ENCODE measurements at regions of chrX and their contacts with region 1.

Region 1: GRCh38 chrX:55057675-55058249 is 17.1 kb upstream of the PAGE2B start:
- DNase-seq: peak in 1 of 5 donors; percentile 18
- ATAC-seq: peak in 3 of 4 donors; percentile 53 to 77 (median 66)
- H3K4me3 ChIP-seq: peak overlapping the region in 4 of 12 donors; percentile 18 to 42 (median 41)
- H3K27ac ChIP-seq: no peak overlapping the region
- H3K4me1 ChIP-seq: peaks cover 0 to 8% (median 0%) of the 10 kb centered on the region in 12 donors
- H3K27me3 ChIP-seq: peaks cover 0 to 10% (median 0%) of the 10 kb centered on the region in 9 donors
- CTCF ChIP-seq: peak; percentile 59 to 83 (median 72)
- POLR2A ChIP-seq: no peak

Region 2: DNA sequence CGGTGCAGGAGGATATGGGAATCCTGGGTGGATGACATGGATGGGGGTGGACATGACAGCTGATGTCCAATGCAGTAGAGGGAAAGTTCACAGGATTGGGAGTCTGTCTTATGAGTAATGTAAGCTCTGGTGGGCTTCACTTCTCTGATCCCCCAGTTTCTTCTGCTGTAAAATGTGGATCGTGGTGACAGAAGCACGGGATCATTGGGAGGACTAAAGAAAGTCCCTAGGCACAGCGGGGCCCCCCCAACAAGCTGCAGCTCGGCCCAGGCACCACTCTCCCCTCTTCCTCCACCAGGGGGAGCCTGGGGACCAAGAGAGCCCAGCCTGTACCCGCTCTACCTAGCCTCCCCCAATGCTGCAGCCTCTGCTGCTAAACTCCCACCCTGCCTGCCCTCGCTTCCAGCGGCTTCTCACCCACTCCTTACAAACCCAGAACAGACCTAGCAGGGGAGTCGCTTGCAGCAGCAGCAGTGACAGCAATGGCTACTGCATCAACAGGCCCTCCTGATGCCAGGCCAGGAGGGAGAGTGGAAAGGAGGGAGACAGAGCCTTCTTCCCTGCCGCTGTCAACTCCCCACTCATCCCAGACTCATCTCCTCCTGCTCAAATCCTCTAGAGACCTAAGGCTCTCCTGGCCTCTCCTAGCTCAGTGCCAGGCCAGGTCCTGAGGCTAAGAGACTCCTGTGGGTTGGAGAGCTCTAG is 1740.2 kb before region 1 on chrX:
- intact Hi-C with region 1: loop called in 1 of 10 experiments (anchors 10 kb)
- DNase-seq: peak; percentile 40 to 73 (median 60)
- ATAC-seq: peak; percentile 74 to 85 (median 78)
- H3K4me3 ChIP-seq: no peak overlapping the region
- H3K27ac ChIP-seq: no peak overlapping the region
- H3K4me1 ChIP-seq: peaks cover 0 to 35% (median 0%) of the 10 kb centered on the region in 12 donors
- H3K27me3 ChIP-seq: peaks cover 0 to 65% (median 0%) of the 10 kb centered on the region in 9 donors
- CTCF ChIP-seq: peak; percentile 54 to 88 (median 70)
- POLR2A ChIP-seq: no peak

Region 3: DNA sequence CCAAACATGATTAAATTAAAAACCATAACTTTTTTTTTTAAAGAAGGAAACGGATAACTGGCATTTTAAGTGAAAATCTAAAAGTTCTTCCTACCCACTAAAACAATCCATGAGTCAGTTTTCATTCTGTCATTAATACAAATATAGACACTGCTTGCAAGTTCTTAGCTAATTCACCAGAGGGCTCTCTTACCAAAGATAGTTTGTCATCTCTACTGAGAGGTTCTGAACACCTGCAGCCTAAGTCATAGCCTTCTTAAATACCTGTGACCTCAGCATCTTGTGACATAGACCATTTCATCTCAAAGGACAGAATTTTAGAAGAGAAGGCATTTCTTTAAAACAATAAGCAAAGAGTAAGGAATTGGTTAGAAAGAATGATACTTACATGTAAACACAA is 809.5 kb before region 1 on chrX:
- intact Hi-C with region 1: loop called in 2 of 10 experiments (anchors 10 kb)
- DNase-seq: no peak
- ATAC-seq: peak in 2 of 4 donors; percentile 44 to 76
- H3K4me3 ChIP-seq: no peak overlapping the region
- H3K27ac ChIP-seq: no peak overlapping the region
- H3K4me1 ChIP-seq: no peaks in the 10 kb centered on the region
- H3K27me3 ChIP-seq: peaks cover 0 to 6% (median 0%) of the 10 kb centered on the region in 9 donors
- CTCF ChIP-seq: peak in 7 of 12 donors; percentile 17 to 43 (median 30)
- POLR2A ChIP-seq: no peak

Region 4: DNA sequence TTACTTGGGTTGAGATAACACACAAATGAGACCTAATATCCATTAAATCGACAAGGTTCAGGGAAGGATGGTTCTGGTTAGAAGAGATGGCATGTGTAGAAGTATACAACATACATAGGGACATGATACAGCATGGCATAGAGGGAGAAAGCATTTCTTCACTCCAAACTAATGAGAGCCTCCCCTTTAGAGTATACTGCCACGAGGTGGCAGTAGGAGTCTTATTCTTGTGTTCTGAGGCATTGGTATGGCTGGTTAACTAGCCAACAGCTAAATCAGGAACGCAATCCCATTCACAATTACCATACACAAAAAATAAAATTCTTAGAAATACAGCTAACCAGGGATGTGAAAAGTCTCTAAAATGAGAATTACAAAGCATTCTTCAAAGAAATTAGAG is 166.2 kb before region 1 on chrX:
- intact Hi-C with region 1: loop called in 9 of 10 experiments (anchors 1 to 10 kb)
- DNase-seq: peak in 2 of 5 donors; percentile 16 to 22
- ATAC-seq: peak in 2 of 4 donors; percentile 38 to 48
- H3K4me3 ChIP-seq: no peak overlapping the region
- H3K27ac ChIP-seq: no peak overlapping the region
- H3K4me1 ChIP-seq: no peaks in the 10 kb centered on the region
- H3K27me3 ChIP-seq: peaks cover 0 to 23% (median 0%) of the 10 kb centered on the region in 9 donors
- CTCF ChIP-seq: peak in 10 of 12 donors; percentile 20 to 60 (median 41)
- POLR2A ChIP-seq: no peak